ENCODE measurements at regions of chr20 and their contacts with region 1.

Region 1: DNA sequence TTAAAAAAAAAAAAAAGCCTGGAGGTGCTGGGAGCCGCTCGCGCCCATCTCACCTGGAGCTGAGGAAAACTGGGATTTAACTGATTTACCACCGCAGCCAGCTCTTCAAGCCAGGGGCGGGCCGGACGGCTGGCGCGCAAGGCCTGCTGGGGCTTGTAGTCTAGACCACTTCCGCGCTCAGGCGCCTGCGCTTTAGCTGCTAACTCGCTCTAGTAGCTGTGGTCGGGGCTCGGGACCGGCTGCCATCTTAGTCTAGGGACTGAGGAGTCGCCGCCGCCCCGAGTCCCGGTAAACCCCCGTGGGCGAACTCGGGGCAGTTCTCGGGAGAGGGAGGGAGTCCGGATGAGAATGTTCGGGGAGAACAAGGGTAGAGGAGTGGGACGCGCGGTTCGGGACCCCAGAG is at the start of gene ITCH:
- DNase-seq: peak; percentile 90
- H3K4me3 Mint-ChIP-seq: peak within 1 kb of the TSS; percentile 87
- H3K27ac Mint-ChIP-seq: peak within 1 kb of the TSS; percentile 93
- H3K4me1 Mint-ChIP-seq: peaks cover 25% of the 10 kb centered on the region
- H3K27me3 Mint-ChIP-seq: no peaks in the 10 kb centered on the region
- total RNA-seq, gene ITCH: 52.5 and 53.0 TPM in 2 replicates

Region 2: GRCh38 chr20:34302723-34303528 is 60.1 kb before region 1 on chr20 and contains the start of gene AHCY:
- intact Hi-C with region 1: loop called (anchors 1 kb)
- DNase-seq: peak; percentile 93
- H3K4me3 Mint-ChIP-seq: peak within 1 kb of the TSS; percentile 87
- H3K27ac Mint-ChIP-seq: peak within 1 kb of the TSS; percentile 88
- H3K4me1 Mint-ChIP-seq: peaks cover 13% of the 10 kb centered on the region
- H3K27me3 Mint-ChIP-seq: peaks cover 1% of the 10 kb centered on the region
- total RNA-seq, gene AHCY: 120 and 122 TPM in 2 replicates

Region 3: DNA sequence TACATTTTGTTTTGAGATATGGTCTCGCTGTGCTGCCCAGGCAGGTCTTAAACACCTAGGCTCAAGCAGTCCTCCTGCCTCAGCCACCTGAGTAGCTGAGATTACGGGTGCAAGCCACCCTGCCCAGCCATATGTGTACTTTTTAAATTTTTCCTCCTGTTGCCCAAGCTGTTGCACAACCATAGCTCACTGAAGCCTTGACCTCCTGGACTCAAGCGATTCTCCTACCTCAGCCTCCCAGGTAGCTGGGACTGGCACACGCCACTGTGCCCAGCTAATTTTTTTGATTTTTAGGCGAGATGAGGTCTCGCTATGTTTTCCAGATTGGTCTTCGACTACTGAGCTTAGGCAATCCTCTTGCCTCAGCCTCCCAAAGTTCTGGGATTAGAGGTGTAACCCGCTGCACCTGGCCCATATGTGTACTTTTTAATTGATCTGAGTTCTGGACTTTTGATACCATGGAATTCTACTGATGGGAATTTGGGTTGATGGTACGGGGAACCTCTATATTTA is 45.0 kb after region 1 on chr20:
- intact Hi-C with region 1: loop called (anchors 5 kb)
- DNase-seq: no peak
- H3K4me3 Mint-ChIP-seq: no peak overlapping the region
- H3K27ac Mint-ChIP-seq: no peak overlapping the region
- H3K4me1 Mint-ChIP-seq: peaks cover 14% of the 10 kb centered on the region
- H3K27me3 Mint-ChIP-seq: no peaks in the 10 kb centered on the region

Region 4: GRCh38 chr20:34676642-34677373 is 313.7 kb after region 1 on chr20 and contains the start of gene PIGU:
- intact Hi-C with region 1: loop called (anchors 2 kb)
- DNase-seq: peak; percentile 96
- H3K4me3 Mint-ChIP-seq: peak within 1 kb of the TSS; percentile 93
- H3K27ac Mint-ChIP-seq: peak within 1 kb of the TSS; percentile 96
- H3K4me1 Mint-ChIP-seq: peaks cover 17% of the 10 kb centered on the region
- H3K27me3 Mint-ChIP-seq: no peaks in the 10 kb centered on the region
- total RNA-seq, gene PIGU: 24.9 and 25.7 TPM in 2 replicates

Measured in activated T-helper 2 cell treated with anti-CD3 and anti-CD28 coated beads, Interferon-gamma antibody, Interleukin-2, Interleukin-4, amounts not matched to agents 10 μg/mL and 5 μg/mL and 100 μg/mL, durations not matched to agents 14 hours and 24 hours and 36 hours (primary cell).